Activated CD4-positive, alpha-beta memory T cell treated with anti-CD3 and anti-CD28 coated beads for 36 hours (primary cell): ENCODE measurements at regions of chr9 and their contacts with region 1.

Region 1: DNA sequence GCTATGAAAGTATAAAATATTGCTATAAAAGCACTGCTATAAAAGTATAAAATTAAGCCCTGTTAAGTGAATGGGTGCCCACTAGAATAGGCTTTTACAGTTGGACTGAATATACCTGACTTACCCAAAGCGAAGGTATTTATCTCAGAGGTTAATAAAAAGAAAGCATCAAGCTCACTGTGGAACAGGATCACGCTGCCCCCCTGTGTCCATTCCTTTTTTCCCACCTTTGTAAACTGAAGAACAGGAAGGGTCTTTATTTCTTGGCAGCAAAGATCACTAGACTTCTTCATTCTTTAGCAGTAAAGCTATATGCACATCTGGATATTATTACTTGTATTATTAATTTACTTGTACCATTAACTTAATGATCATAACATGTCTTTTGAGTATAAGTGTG is 22.1 kb upstream of the PLPP6 start:
- DNase-seq: peak; percentile 61
- H3K4me3 Mint-ChIP-seq: no peak overlapping the region
- H3K27ac Mint-ChIP-seq: no peak overlapping the region
- H3K4me1 Mint-ChIP-seq: no peaks in the 10 kb centered on the region
- H3K27me3 Mint-ChIP-seq: no peaks in the 10 kb centered on the region

Region 2: GRCh38 chr9:4382722-4383317 is 257.2 kb before region 1 on chr9:
- CTCF ChIA-PET with region 1: interaction called, 4 read pairs
- POLR2A ChIA-PET with region 1: no interaction called
- intact Hi-C with region 1: loop called (anchors 1 kb)
- DNase-seq: no peak
- H3K4me3 Mint-ChIP-seq: no peak overlapping the region
- H3K27ac Mint-ChIP-seq: no peak overlapping the region
- H3K4me1 Mint-ChIP-seq: no peaks in the 10 kb centered on the region
- H3K27me3 Mint-ChIP-seq: no peaks in the 10 kb centered on the region

Region 3: GRCh38 chr9:4583001-4583400 is 57.0 kb before region 1 on chr9:
- CTCF ChIA-PET with region 1: no interaction called
- POLR2A ChIA-PET with region 1: no interaction called
- intact Hi-C with region 1: no loop called
- DNase-seq: no peak
- H3K4me3 Mint-ChIP-seq: no peak overlapping the region
- H3K27ac Mint-ChIP-seq: no peak overlapping the region
- H3K4me1 Mint-ChIP-seq: no peaks in the 10 kb centered on the region
- H3K27me3 Mint-ChIP-seq: no peaks in the 10 kb centered on the region

Region 4: GRCh38 chr9:4604678-4605095 is 35.3 kb before region 1 on chr9:
- CTCF ChIA-PET with region 1: interaction called, 19 read pairs
- POLR2A ChIA-PET with region 1: no interaction called
- intact Hi-C with region 1: loop called (anchors 2 kb)
- DNase-seq: peak; percentile 64
- H3K4me3 Mint-ChIP-seq: no peak overlapping the region
- H3K27ac Mint-ChIP-seq: no peak overlapping the region
- H3K4me1 Mint-ChIP-seq: peaks cover 24% of the 10 kb centered on the region
- H3K27me3 Mint-ChIP-seq: no peaks in the 10 kb centered on the region

Region 5: GRCh38 chr9:4734150-4734549 is 94.1 kb after region 1 on chr9:
- CTCF ChIA-PET with region 1: no interaction called
- POLR2A ChIA-PET with region 1: no interaction called
- intact Hi-C with region 1: no loop called
- DNase-seq: no peak
- H3K4me3 Mint-ChIP-seq: no peak overlapping the region
- H3K27ac Mint-ChIP-seq: no peak overlapping the region
- H3K4me1 Mint-ChIP-seq: peaks cover 35% of the 10 kb centered on the region
- H3K27me3 Mint-ChIP-seq: no peaks in the 10 kb centered on the region